Posterior cingulate gyrus (tissue), 11 donors: ENCODE measurements at regions of chr13 and their contacts with region 1.

Region 1: DNA sequence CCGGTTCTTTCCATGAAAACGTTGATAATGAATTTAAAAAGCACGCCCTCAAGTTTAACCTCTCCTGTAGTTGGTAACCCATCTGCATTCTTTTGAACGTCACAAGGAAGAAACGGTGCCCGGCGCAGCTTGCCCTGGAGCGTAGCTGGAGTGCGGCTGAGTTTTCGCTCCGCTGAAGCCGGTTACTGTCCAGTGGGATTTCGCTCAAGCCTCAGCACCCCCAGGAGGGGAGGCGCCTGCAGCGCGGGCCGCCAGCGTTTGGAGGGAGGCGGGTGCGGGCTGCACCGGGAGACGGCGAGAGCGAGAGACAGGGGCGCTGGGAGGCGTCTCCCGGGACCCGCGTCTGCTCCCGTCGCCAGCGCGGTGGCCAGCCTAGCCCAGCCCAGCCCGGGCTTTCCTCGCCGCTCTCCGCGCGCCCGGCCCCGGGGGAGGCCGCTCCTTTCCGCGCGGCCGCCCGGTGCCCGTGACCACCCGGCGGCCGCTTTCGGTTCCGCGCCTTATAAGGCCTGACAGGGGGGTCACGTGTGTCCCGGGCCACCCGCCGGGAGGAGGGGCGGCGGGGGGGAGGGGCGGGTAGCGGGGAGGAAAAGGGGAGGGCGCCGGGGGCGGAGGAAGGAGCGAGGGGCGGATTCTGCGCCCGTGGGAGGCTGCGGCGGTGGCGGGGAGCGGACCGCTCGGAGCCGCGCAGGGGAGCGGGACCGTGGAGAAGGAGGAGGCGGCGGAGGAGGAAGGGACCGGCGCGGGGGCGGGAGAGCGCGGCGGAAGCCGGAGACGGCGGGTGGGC is 8.3 kb upstream of the DGKH start:
- DNase-seq: peak; percentile 75 to 97 (median 84)

Region 2: DNA sequence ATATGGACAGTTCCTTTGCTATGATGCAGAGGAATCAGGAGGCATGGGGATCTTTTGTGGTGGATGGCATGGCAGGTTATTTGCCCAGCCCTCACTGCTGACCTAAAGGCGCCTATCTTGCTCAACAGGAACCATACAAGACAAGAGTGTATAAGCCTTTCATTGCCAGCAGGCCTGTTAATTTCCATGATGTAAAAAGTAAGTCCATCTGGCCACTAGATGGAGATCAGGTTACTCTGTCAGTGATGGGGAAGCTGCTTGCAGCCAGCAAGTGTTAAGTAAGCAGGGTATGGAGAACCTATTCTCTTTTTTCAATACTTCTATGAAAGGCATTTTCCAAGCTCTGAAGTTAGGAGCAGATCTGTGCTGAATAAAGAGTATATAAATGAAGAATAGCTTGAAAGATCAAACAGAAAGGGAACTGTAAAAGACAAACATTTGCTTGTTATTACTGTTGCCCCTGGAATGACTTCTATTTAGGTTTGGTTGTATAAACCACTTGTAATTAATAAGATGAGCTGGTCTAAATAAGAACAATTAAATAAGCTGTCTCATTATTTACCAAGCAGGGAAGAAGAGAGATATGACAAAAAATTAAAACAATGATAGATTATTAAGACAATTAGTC is 371.9 kb before region 1 on chr13:
- intact Hi-C with region 1: loop called (anchors 5 kb)
- DNase-seq: peak in 4 of 10 donors; percentile 27 to 75 (median 40)

Region 3: DNA sequence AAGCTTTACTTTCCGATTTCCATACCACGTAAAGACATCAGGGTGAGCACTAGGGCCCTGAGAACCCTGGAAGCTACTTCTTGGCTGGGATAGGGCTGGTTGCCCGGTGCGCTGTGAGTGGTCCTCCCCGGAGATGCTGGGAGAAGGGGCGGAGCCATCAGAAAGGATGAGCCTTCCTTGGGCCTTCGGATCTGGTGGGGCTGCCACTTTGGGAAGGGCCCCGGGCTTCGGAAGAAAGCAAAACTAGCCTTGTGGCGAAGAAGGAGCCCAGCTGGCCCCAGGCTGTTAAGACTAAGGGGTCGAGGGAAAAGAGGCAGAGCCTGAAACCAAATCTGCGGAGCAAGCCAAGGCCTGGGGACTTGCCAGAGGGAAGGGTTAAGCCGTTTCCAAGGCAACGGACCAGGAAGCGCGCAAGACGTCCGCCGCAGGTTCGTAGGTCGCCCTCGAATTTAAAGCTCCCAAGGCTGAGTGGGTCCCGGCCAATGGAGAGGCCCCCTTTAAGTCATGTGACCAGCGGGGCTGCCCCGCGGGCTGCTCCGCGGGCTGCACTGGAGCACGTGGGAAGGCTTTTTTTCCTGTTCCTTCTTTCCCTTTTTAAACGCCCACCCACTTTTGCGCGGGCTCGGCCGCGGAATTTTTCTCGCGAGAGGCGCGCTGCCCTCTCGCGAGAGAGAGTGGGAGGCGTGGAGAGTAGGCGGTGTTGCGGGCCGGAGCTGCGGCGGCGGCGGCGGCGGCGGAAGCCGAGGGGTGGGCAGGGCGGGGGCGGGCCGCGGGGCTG is 231.4 kb after region 1 on chr13:
- intact Hi-C with region 1: loop called (anchors 10 kb)
- DNase-seq: peak; percentile 95 to 100 (median 97)